PC-9 (cell line): ENCODE measurements at regions of chr12 and their contacts with region 1.

Region 1: DNA sequence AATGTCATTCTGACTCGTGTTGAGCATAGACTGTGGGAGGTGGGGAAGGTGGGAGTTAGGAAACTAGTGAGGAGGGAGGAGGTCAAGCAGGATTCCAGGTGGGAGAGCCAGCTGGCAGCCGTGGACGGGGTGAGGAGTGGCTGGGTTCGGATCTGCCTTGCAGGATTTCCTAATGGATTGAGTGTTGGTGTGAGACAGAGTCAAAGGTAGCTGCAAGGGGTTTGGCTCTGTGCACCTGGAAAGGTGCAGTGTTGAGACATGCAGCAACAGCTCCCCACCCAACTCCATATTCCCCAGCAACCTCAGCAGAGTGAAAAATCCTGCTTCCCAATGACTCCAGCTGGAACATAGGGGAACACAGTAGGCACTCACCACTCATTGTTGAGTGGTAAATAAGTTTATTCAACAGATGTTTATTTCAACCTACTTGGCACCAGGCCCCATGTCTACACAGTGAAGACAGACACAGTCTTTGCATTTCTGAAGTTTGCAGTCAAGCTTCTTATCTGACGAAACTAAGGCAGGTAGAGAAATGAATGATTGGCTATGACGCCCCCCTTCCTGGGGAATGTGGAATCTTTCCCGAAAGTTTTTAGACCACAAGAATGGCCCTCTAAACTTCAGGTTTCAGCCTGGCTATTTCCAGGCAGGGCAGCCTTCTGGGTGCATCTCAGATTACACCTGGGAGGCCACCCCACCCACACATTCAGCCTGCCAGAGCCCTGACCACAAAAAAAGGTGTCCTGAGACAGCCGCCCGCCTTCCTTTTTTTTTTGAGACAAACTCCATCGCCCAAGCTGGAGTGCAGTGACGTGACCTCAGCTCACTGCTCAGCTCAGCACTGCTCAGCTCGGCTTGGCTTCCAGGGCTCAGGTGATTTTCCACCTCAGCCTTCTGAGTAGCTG is 37.9 kb upstream of the PLEKHG6 start:
- DNase-seq: peak; percentile 99
- H3K4me3 ChIP-seq: peak overlapping the region; percentile 23; the same call in 1 of the 2 replicates
- H3K27ac ChIP-seq: peak overlapping the region; percentile 98
- H3K4me1 ChIP-seq: peaks cover 64% of the 10 kb centered on the region
- H3K27me3 ChIP-seq: no peaks in the 10 kb centered on the region
- CTCF ChIP-seq: no peak

Region 2: DNA sequence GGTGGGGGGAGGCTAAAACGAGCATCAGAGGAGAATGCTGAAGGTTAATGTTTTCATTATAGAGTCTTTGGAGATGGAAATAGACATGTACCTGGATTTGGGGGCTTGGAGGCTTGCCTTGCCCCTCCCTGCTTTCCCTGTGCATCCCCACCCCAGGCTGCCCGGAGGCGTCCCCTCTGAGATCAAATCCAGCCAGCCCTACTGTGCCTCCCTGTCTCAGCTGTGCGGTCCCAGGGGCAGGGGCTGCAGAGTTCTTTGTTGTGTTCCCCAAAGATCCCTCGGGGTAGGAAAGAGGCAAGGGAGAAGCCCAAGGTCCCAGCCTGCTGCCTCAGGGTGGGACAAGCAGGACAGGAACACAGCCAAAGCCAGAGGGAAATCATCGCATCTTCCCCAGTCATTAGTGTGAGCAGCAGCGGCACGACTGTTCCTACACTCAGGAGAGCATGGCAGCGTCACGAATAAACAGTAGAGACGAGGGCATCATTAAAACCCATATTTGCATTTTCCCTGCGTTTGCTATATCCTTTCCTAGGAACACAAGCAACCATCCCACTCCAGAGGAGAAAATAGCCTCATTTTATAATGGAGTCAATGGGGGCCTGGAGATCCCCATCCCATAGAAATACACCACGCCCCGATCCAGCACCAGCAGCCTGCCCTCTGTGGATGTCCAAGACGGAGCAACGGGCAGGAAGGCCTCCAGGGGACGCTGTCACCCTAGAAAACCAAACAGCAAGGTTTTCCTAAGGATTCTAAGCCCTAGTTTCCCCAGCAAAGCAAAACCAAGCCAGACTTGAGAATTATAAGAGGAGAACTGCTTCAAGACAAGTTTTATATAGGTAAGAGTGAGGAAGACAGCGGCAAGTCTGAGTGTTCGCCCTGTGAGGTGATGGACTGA is 359.9 kb before region 1 on chr12:
- CTCF ChIA-PET with region 1: no interaction called
- POLR2A ChIA-PET with region 1: interaction called, 45 read pairs
- intact Hi-C with region 1: no loop called
- DNase-seq: no peak
- H3K4me3 ChIP-seq: no peak overlapping the region
- H3K27ac ChIP-seq: no peak overlapping the region
- H3K4me1 ChIP-seq: no peaks in the 10 kb centered on the region
- H3K27me3 ChIP-seq: peaks cover 96% of the 10 kb centered on the region
- CTCF ChIP-seq: peak; percentile 42

Region 3: DNA sequence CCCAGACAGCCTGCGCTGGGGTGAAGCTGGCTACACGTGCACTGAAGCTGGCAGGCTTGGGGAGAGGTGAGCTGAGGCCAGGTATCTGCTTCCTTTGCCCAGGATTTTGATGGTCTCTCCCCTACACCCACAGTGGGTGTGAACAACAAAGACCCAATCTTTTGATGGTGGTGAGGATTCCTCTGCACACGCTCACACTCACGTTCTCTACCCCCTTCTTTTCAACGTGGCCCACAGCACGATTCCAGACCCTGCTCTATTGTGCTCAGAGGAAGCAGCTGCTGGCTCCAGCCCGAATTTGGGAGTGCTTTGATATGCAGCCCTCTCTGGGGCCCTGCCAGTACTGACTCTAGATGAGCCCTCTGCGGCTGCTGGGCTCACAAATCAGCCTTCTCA is 67.4 kb before region 1 on chr12:
- CTCF ChIA-PET with region 1: interaction called, 6 read pairs
- POLR2A ChIA-PET with region 1: interaction called, 25 read pairs
- intact Hi-C with region 1: loop called (anchors 1 kb)
- DNase-seq: peak in 1 of 2 experiments; percentile 20
- H3K4me3 ChIP-seq: no peak overlapping the region
- H3K27ac ChIP-seq: no peak overlapping the region
- H3K4me1 ChIP-seq: peaks cover 45% of the 10 kb centered on the region
- H3K27me3 ChIP-seq: no peaks in the 10 kb centered on the region
- CTCF ChIP-seq: no peak

Region 4: GRCh38 chr12:6250343-6250742 is 22.2 kb before region 1 on chr12:
- CTCF ChIA-PET with region 1: interaction called, 12 read pairs
- POLR2A ChIA-PET with region 1: no interaction called
- intact Hi-C with region 1: no loop called
- DNase-seq: no peak
- H3K4me3 ChIP-seq: no peak overlapping the region
- H3K27ac ChIP-seq: no peak overlapping the region
- H3K4me1 ChIP-seq: peaks cover 20% of the 10 kb centered on the region
- H3K27me3 ChIP-seq: no peaks in the 10 kb centered on the region
- CTCF ChIP-seq: no peak

Region 5: DNA sequence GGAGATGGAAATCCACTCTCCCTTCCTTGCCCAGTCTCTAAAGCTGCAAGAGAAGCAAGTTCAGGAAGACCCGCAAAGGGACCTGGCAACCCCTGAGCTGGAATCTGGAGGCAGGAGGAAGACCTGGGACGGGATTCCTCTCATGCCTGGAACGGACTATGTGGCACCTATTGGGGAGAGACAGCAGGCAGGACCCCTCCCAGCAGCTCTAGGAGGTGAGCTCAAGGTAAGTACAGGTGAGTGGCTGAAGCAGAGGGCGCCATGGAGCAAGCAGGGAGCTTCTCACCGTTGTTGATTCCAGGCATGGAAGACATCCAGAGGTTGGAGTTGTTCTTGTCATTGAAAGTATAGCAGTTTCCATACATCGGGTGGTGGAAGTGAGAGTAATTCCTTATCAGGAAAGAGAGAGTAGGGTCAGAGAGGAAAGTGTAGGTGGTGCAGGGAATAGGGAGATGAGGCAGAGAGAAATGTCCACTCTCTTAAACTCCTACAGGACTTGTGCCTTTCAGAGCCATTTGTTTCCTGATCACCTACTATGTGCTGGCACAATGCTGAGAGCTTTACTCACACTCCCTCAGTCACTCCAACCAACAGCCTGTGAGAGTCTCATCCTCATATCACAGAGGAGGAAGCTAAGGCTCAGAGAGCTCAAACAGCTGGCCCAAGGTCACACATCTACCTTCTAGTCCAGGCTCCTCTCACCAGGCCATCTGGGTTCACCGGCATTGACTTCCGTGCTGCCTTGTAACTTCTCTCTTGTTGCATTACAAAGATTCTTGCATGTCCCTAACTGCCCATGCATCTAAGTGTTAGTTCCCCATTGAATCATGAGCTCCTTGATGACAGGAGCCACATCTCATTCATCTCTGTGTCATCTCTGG is 83.2 kb after region 1 on chr12:
- CTCF ChIA-PET with region 1: no interaction called
- POLR2A ChIA-PET with region 1: no interaction called
- intact Hi-C with region 1: no loop called
- DNase-seq: no peak
- H3K4me3 ChIP-seq: no peak overlapping the region
- H3K27ac ChIP-seq: no peak overlapping the region
- H3K4me1 ChIP-seq: no peaks in the 10 kb centered on the region
- H3K27me3 ChIP-seq: no peaks in the 10 kb centered on the region
- CTCF ChIP-seq: no peak; the same call in 1 of the 2 replicates

Region 6: GRCh38 chr12:6407236-6407954 is 134.8 kb after region 1 on chr12:
- CTCF ChIA-PET with region 1: no interaction called
- POLR2A ChIA-PET with region 1: no interaction called
- intact Hi-C with region 1: no loop called
- DNase-seq: no peak
- H3K4me3 ChIP-seq: no peak overlapping the region
- H3K27ac ChIP-seq: no peak overlapping the region
- H3K4me1 ChIP-seq: no peaks in the 10 kb centered on the region
- H3K27me3 ChIP-seq: no peaks in the 10 kb centered on the region
- CTCF ChIP-seq: no peak

Region 7: DNA sequence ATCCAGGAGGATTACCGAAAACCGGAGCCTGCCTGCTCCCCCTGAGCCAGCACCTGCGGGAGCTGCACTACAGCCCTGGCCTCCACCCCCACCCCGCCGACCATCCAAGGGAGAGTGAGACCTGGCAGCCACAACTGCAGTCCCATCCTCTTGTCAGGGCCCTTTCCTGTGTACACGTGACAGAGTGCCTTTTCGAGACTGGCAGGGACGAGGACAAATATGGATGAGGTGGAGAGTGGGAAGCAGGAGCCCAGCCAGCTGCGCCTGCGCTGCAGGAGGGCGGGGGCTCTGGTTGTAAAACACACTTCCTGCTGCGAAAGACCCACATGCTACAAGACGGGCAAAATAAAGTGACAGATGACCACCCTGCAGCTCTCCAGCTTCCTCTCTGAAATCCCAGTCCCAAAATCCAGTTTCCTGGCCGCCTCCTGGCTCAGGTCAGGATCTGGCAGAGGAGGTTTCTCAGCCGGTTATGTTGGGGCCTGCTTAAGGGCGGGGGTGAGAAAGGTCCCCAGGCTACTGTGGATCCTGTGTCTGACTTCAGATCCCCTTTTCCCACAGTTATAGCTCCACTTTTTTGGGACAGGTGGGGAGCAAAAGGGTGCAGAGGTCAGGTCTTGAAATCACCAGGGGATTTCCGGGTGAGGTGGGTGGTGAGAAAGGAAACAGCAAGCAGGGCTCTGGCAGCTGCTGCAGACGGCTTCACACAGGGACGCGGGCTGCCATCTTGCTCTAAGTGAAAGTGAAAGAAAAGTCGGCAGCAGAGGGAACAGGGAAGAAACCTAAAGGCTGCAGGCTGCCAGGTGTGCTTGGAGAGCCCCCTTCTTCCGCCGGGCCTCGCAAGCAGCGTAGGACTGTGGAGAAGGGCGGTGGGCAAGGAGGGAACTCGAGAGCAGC is 179.0 kb after region 1 on chr12 and contains the start of gene TAPBPL:
- CTCF ChIA-PET with region 1: no interaction called
- POLR2A ChIA-PET with region 1: interaction called, 18 read pairs
- intact Hi-C with region 1: no loop called
- DNase-seq: peak; percentile 70 to 85
- H3K4me3 ChIP-seq: peak within 1 kb of the TSS; percentile 63
- H3K27ac ChIP-seq: peak within 1 kb of the TSS; percentile 52
- H3K4me1 ChIP-seq: peaks cover 13% of the 10 kb centered on the region
- H3K27me3 ChIP-seq: no peaks in the 10 kb centered on the region
- CTCF ChIP-seq: no peak
- total RNA-seq, gene TAPBPL: 26.0 and 27.8 TPM in 2 replicates